ENCODE measurements at regions of chr16 and their contacts with region 1.

Region 1: GRCh38 chr16:63289852-63290460 is 1253.7 kb upstream of the CDH8 start:
- DNase-seq: peak; percentile 53 to 67
- H3K4me3 ChIP-seq: no peak overlapping the region
- H3K4me3 Mint-ChIP-seq: no peak overlapping the region
- H3K27ac Mint-ChIP-seq: no peak overlapping the region
- H3K4me1 ChIP-seq: no peaks in the 10 kb centered on the region
- H3K4me1 Mint-ChIP-seq: no peaks in the 10 kb centered on the region
- H3K27me3 ChIP-seq: peaks cover 1% of the 10 kb centered on the region; the same call in 1 of the 2 replicates
- H3K27me3 Mint-ChIP-seq: peaks cover 4% of the 10 kb centered on the region
- CTCF ChIP-seq: peak; percentile 89 to 93

Region 2: GRCh38 chr16:62190426-62190825 is 1099.5 kb before region 1 on chr16:
- CTCF ChIA-PET with region 1: interaction called, 16 read pairs
- POLR2A ChIA-PET with region 1: no interaction called
- intact Hi-C with region 1: no loop called
- DNase-seq: peak in 1 of 2 experiments; percentile 21
- H3K4me3 ChIP-seq: no peak overlapping the region
- H3K4me3 Mint-ChIP-seq: no peak overlapping the region
- H3K27ac Mint-ChIP-seq: no peak overlapping the region
- H3K4me1 ChIP-seq: no peaks in the 10 kb centered on the region
- H3K4me1 Mint-ChIP-seq: no peaks in the 10 kb centered on the region
- H3K27me3 ChIP-seq: no peaks in the 10 kb centered on the region
- H3K27me3 Mint-ChIP-seq: peaks cover 5% of the 10 kb centered on the region
- CTCF ChIP-seq: peak; percentile 63 to 74

Region 3: GRCh38 chr16:63061319-63061718 is 228.6 kb before region 1 on chr16:
- CTCF ChIA-PET with region 1: interaction called, 3 read pairs
- POLR2A ChIA-PET with region 1: no interaction called
- intact Hi-C with region 1: loop called (anchors 1 kb)
- DNase-seq: peak; percentile 25 to 33
- H3K4me3 ChIP-seq: no peak overlapping the region
- H3K4me3 Mint-ChIP-seq: no peak overlapping the region
- H3K27ac Mint-ChIP-seq: no peak overlapping the region
- H3K4me1 ChIP-seq: no peaks in the 10 kb centered on the region
- H3K4me1 Mint-ChIP-seq: no peaks in the 10 kb centered on the region
- H3K27me3 ChIP-seq: no peaks in the 10 kb centered on the region
- H3K27me3 Mint-ChIP-seq: peaks cover 15% of the 10 kb centered on the region
- CTCF ChIP-seq: peak in 1 of 2 experiments; percentile 12

Region 4: GRCh38 chr16:63216696-63217423 is 73.1 kb before region 1 on chr16:
- CTCF ChIA-PET with region 1: no interaction called
- POLR2A ChIA-PET with region 1: no interaction called
- intact Hi-C with region 1: no loop called
- DNase-seq: no peak
- H3K4me3 ChIP-seq: no peak overlapping the region
- H3K4me3 Mint-ChIP-seq: no peak overlapping the region
- H3K27ac Mint-ChIP-seq: no peak overlapping the region
- H3K4me1 ChIP-seq: no peaks in the 10 kb centered on the region
- H3K4me1 Mint-ChIP-seq: no peaks in the 10 kb centered on the region
- H3K27me3 ChIP-seq: no peaks in the 10 kb centered on the region
- H3K27me3 Mint-ChIP-seq: no peaks in the 10 kb centered on the region
- CTCF ChIP-seq: no peak

Measured in Caco-2 (cell line).